Activated CD4-positive, alpha-beta memory T cell treated with anti-CD3 and anti-CD28 coated beads for 36 hours (primary cell): ENCODE measurements at regions of chr10 and their contacts with region 1.

Region 1: GRCh38 chr10:77710759-77711682 is 73.4 kb upstream of the KCNMA1 start:
- DNase-seq: peak; percentile 79
- H3K4me3 Mint-ChIP-seq: no peak overlapping the region
- H3K27ac Mint-ChIP-seq: no peak overlapping the region
- H3K4me1 Mint-ChIP-seq: peaks cover 11% of the 10 kb centered on the region
- H3K27me3 Mint-ChIP-seq: peaks cover 19% of the 10 kb centered on the region

Region 2: GRCh38 chr10:77173615-77174461 is 537.2 kb before region 1 on chr10:
- CTCF ChIA-PET with region 1: interaction called, 31 read pairs
- POLR2A ChIA-PET with region 1: no interaction called
- intact Hi-C with region 1: no loop called
- DNase-seq: peak; percentile 74
- H3K4me3 Mint-ChIP-seq: no peak overlapping the region
- H3K27ac Mint-ChIP-seq: no peak overlapping the region
- H3K4me1 Mint-ChIP-seq: no peaks in the 10 kb centered on the region
- H3K27me3 Mint-ChIP-seq: peaks cover 3% of the 10 kb centered on the region

Region 3: GRCh38 chr10:77613476-77614130 is 97.4 kb before region 1 on chr10:
- CTCF ChIA-PET with region 1: no interaction called
- POLR2A ChIA-PET with region 1: no interaction called
- intact Hi-C with region 1: no loop called
- DNase-seq: no peak
- H3K4me3 Mint-ChIP-seq: no peak overlapping the region
- H3K27ac Mint-ChIP-seq: no peak overlapping the region
- H3K4me1 Mint-ChIP-seq: no peaks in the 10 kb centered on the region
- H3K27me3 Mint-ChIP-seq: peaks cover 1% of the 10 kb centered on the region

Region 4: DNA sequence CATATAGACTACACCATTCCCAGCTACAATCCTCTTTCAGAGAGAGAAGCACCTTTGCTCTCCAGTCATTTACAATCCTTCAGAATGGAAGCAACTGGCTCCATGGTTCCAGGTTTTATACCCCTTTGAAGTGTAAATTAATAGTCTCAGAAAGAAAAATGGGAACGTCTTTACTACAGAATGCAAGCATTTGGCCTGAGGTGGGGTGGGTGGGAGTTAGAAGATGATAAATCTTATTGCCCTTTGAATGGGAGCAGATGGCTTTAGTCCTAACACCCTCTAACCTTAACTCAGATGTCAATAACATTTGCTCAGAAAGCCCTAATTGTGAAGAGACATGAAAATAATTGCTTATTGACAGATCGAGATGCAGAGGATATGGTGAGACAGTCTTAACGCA is 10.8 kb after region 1 on chr10:
- CTCF ChIA-PET with region 1: interaction called, 33 read pairs
- POLR2A ChIA-PET with region 1: no interaction called
- intact Hi-C with region 1: no loop called
- DNase-seq: no peak
- H3K4me3 Mint-ChIP-seq: no peak overlapping the region
- H3K27ac Mint-ChIP-seq: no peak overlapping the region
- H3K4me1 Mint-ChIP-seq: peaks cover 4% of the 10 kb centered on the region
- H3K27me3 Mint-ChIP-seq: peaks cover 4% of the 10 kb centered on the region

Region 5: DNA sequence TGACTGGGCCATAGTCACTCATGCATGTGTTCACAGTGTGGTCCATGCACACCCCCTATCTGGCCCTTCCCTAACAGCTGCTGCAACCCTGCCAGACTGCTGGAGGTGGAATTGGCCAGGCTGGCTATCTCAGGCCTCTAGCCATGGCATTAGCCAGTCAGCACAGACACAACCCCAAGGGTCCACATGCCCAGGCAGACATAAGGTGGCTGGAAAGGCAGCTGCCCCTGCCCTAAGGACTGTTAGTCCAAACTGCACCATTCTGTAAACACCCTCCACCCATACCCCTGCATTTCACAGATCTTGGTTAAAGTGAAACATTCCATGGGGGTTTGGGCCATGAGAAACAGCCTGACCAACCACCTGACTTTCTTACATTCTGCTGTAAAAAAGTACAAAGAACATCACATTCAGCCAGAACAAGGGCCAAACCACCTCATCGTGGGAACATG is 63.9 kb after region 1 on chr10:
- CTCF ChIA-PET with region 1: no interaction called
- POLR2A ChIA-PET with region 1: no interaction called
- intact Hi-C with region 1: no loop called
- DNase-seq: no peak
- H3K4me3 Mint-ChIP-seq: no peak overlapping the region
- H3K27ac Mint-ChIP-seq: no peak overlapping the region
- H3K4me1 Mint-ChIP-seq: peaks cover 2% of the 10 kb centered on the region
- H3K27me3 Mint-ChIP-seq: peaks cover 2% of the 10 kb centered on the region

Region 6: DNA sequence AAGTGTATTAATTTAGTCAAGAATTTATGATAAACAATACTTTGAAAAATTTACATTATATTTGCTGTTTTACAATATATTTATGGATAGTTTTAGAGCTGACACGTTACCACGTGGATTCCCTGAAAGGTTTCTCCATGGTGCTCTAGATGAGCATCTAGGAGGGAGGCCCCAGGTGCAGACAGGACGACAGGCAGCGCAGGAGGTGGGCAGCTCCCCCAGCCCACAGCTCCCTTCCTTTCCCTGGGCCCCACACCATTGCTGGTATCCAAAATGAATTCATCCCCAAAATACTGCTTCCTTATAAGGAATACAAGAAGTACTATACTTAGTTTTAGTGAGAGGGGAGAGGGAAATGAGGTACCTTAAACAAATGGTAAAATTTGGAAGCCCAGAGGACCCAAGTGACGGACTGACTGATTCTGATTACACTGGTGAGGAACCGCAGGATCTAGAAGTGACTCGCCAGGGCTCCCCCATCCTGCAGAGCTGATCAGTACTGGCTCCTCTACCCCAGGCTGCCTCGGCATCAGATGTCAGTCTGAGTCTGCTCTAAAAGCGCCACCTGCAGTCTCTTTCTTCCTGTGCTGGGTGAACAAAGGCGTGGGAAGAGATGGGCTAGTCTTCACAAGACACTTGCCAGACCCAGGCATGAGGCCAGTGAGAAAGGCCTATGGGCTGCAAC is 126.4 kb after region 1 on chr10:
- CTCF ChIA-PET with region 1: interaction called, 76 read pairs
- POLR2A ChIA-PET with region 1: no interaction called
- intact Hi-C with region 1: loop called (anchors 1 kb)
- DNase-seq: peak; percentile 89
- H3K4me3 Mint-ChIP-seq: no peak overlapping the region
- H3K27ac Mint-ChIP-seq: peak overlapping the region; percentile 23
- H3K4me1 Mint-ChIP-seq: peaks cover 16% of the 10 kb centered on the region
- H3K27me3 Mint-ChIP-seq: no peaks in the 10 kb centered on the region